Common myeloid progenitor, CD34-positive (primary cell): ENCODE measurements at regions of chr5 and their contacts with region 1.

Region 1: GRCh38 chr5:133996683-133997252 is 8.0 kb downstream of the VDAC1 start:
- DNase-seq: peak; percentile 25 to 52 (median 51)
- H3K4me3 ChIP-seq: no peak overlapping the region
- H3K27ac ChIP-seq: no peak overlapping the region
- H3K4me1 ChIP-seq: peaks cover 0 to 8% (median 3%) of the 10 kb centered on the region in 4 experiments
- H3K27me3 ChIP-seq: no peaks in the 10 kb centered on the region

Region 2: GRCh38 chr5:133952729-133953567 is 43.8 kb before region 1 on chr5:
- CTCF ChIA-PET with region 1: no interaction called
- POLR2A ChIA-PET with region 1: no interaction called
- DNase-seq: no peak
- H3K4me3 ChIP-seq: no peak overlapping the region
- H3K27ac ChIP-seq: no peak overlapping the region
- H3K4me1 ChIP-seq: no peaks in the 10 kb centered on the region
- H3K27me3 ChIP-seq: no peaks in the 10 kb centered on the region

Region 3: GRCh38 chr5:133968049-133968980 is 28.5 kb before region 1 on chr5 and contains the start of gene C5orf15:
- CTCF ChIA-PET with region 1: interaction called, 15 read pairs
- POLR2A ChIA-PET with region 1: no interaction called
- DNase-seq: peak; percentile 97 to 99 (median 98)
- H3K4me3 ChIP-seq: peak within 1 kb of the TSS; percentile 81 to 99 (median 91)
- H3K27ac ChIP-seq: peak within 1 kb of the TSS; percentile 85 to 94
- H3K4me1 ChIP-seq: peaks cover 0 to 18% (median 17%) of the 10 kb centered on the region in 4 experiments
- H3K27me3 ChIP-seq: no peaks in the 10 kb centered on the region

Region 4: DNA sequence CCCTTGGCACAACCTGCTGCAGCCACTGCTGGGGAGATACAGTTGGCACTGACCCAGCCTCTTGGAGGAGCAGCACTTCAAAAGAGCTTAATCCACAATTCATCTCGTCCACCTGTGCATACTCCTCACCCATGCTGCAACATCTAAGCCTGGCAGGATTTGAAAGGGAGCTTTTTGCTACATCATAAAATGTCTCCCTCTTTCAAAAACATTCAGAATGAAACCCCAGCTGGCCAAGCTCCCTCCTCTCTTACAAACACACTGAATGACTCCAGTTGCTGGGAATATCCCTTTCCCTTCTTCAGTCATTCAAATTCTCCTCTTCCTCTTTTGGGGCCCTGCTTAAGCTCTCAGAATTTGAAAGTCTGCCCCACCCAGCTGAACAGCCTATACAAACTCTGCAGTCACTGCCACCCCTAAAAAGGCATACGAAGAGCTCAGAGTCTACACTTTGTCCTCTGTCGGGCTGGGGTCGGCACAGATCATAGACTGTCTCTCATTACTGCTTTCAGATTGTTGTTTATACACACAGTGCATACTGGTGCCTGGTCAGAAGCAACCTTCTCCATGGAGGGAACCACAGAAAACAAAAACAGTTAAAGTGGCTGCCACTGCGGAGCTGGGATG is 19.5 kb before region 1 on chr5:
- CTCF ChIA-PET with region 1: interaction called, 172 read pairs
- POLR2A ChIA-PET with region 1: interaction called, 4 read pairs
- DNase-seq: no peak
- H3K4me3 ChIP-seq: no peak overlapping the region
- H3K27ac ChIP-seq: no peak overlapping the region
- H3K4me1 ChIP-seq: peaks cover 0 to 5% (median 2%) of the 10 kb centered on the region in 4 experiments
- H3K27me3 ChIP-seq: no peaks in the 10 kb centered on the region